ENCODE measurements at regions of chr20 and their contacts with region 1.

Region 1: GRCh38 chr20:46562373-46563169 is 12.1 kb upstream of the OCSTAMP start:
- DNase-seq: peak; percentile 50 to 90
- H3K4me3 ChIP-seq: peak overlapping the region in 3 of 4 experiments; percentile 27 to 51 (median 45); a peak in 6 of 8 replicates
- H3K27ac ChIP-seq: peak overlapping the region; percentile 78
- H3K4me1 ChIP-seq: peaks cover 8 to 19% (median 13%) of the 10 kb centered on the region in 4 experiments
- H3K27me3 ChIP-seq: no peaks in the 10 kb centered on the region
- CTCF ChIP-seq: peak; percentile 64 to 92 (median 68)
- EP300 ChIP-seq: no peak
- POLR2A ChIP-seq: no peak
- RAD21 ChIP-seq: peak; percentile 46 to 56

Region 2: GRCh38 chr20:46520976-46521579 is 41.5 kb before region 1 on chr20:
- CTCF ChIA-PET with region 1: interaction called, 24 read pairs
- POLR2A ChIA-PET with region 1: no interaction called
- DNase-seq: peak; percentile 59 to 71
- H3K4me3 ChIP-seq: no peak overlapping the region
- H3K27ac ChIP-seq: no peak overlapping the region
- H3K4me1 ChIP-seq: no peaks in the 10 kb centered on the region; a peak in 1 of 7 replicates
- H3K27me3 ChIP-seq: no peaks in the 10 kb centered on the region
- CTCF ChIP-seq: peak; percentile 87 to 99 (median 91)
- EP300 ChIP-seq: no peak
- POLR2A ChIP-seq: no peak
- RAD21 ChIP-seq: peak; percentile 95 to 99

Region 3: GRCh38 chr20:46539113-46539512 is 23.5 kb before region 1 on chr20:
- CTCF ChIA-PET with region 1: interaction called, 19 read pairs
- POLR2A ChIA-PET with region 1: no interaction called
- DNase-seq: no peak
- H3K4me3 ChIP-seq: no peak overlapping the region
- H3K27ac ChIP-seq: no peak overlapping the region
- H3K4me1 ChIP-seq: peaks cover 0 to 5% (median 2%) of the 10 kb centered on the region in 4 experiments; a peak in 2 of 7 replicates
- H3K27me3 ChIP-seq: no peaks in the 10 kb centered on the region
- CTCF ChIP-seq: peak in 2 of 3 experiments; percentile 37 to 56; a peak in 3 of 4 replicates
- EP300 ChIP-seq: no peak
- POLR2A ChIP-seq: no peak
- RAD21 ChIP-seq: peak; percentile 15 to 42; a peak in 1 of 4 replicates

Region 4: DNA sequence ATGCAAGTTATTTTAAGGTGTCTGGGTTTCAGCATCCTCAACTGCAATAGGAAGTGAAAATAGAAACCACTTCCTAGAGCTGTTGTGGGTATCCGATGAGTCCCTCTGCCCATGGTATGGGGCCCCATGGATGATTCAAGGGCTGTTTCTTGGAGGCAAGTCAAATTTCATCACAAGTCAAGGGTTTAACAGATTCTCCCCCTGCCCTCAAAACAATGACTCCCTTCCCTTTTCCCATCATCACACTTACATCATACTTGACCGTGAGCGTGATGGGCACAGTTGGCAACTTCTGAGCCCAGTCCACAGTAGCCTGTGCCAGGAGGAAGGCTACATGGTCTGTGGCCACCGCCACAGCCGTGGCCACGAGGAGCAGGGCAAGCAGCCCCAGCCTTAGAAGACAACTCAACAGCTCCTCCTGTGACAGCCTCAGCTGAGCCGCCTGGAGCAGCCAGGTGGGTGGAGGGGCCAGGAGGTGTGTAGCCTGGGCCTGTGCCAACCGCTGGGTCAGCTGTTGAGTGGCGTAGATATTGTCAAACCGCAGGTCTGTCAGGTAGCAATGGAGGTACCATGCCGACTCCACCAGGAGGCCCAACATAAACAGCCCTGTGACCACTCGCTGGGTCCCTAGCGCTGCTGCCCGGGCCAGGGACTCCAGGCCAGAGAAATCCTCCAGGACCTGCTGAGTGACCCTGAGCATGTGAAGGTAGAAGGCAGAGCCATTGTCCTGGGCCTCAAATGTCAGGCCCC is 17.3 kb before region 1 on chr20:
- CTCF ChIA-PET with region 1: interaction called, 64 read pairs
- POLR2A ChIA-PET with region 1: interaction called, 3 read pairs
- DNase-seq: no peak
- H3K4me3 ChIP-seq: no peak overlapping the region
- H3K27ac ChIP-seq: no peak overlapping the region
- H3K4me1 ChIP-seq: peaks cover 0 to under 1% (median 0%) of the 10 kb centered on the region in 4 experiments; a peak in 2 of 7 replicates
- H3K27me3 ChIP-seq: no peaks in the 10 kb centered on the region; a peak in 2 of 7 replicates
- CTCF ChIP-seq: no peak
- EP300 ChIP-seq: no peak
- POLR2A ChIP-seq: no peak
- RAD21 ChIP-seq: no peak

Region 5: GRCh38 chr20:47019121-47019824 is 456.7 kb after region 1 on chr20:
- CTCF ChIA-PET with region 1: no interaction called
- POLR2A ChIA-PET with region 1: no interaction called
- DNase-seq: no peak
- H3K4me3 ChIP-seq: no peak overlapping the region
- H3K27ac ChIP-seq: no peak overlapping the region
- H3K4me1 ChIP-seq: no peaks in the 10 kb centered on the region; a peak in 1 of 7 replicates
- H3K27me3 ChIP-seq: no peaks in the 10 kb centered on the region
- CTCF ChIP-seq: no peak
- EP300 ChIP-seq: no peak
- POLR2A ChIP-seq: no peak
- RAD21 ChIP-seq: no peak

Measured in H1 (cell line).